Naive thymus-derived CD4-positive, alpha-beta T cell (primary cell): ENCODE measurements at regions of chr1 and their contacts with region 1.

Region 1: DNA sequence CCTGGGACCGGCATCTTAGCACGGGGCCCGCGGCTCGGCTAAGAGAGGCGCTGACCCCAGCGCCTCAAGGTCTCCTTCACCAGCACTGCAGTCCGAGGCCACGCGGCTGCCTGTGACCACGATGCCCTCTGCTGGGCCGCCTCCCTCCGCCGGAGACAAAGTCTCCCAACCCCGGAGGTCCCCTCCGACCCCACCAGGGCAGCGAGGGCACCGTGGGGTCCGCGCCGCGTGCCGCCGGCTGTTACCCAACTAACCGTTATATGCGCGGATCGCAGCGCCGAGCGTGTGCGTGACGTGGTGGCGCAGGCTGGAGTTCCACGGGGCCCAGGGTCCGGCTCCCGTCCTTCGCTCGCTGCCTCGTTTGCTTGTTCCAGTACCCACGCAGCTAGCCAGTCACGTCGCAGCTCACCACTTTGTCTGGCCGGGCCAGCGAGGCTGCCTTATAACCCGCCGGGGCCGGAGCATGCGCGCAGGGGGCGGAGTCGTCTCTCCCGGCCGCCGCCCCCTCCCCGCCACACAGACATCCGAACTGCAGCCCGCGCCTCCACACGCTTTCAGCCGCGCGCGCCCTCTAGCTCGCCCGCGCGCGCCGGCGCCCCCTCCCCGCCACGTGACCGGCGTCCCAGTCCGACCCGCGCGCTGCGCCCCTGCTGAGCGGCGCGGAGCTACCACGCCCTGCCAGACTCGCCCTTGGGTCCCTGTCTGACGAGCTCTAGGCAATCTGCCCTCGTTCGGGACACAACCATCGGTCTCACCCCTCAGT is at the start of gene SLC16A1:
- DNase-seq: peak; percentile 80 to 94 (median 87)
- ATAC-seq: peak; percentile 90
- H3K4me3 ChIP-seq: peak within 1 kb of the TSS; percentile 97
- H3K4me3 Mint-ChIP-seq: peak within 1 kb of the TSS; percentile 71 to 100 (median 97)
- H3K27ac ChIP-seq: peak within 1 kb of the TSS; percentile 81
- H3K27ac Mint-ChIP-seq: peak within 1 kb of the TSS; percentile 25 to 100 (median 88)
- H3K4me1 ChIP-seq: peaks cover 16 to 17% of the 10 kb centered on the region in 2 donors
- H3K4me1 Mint-ChIP-seq: peaks cover 33 to 66% (median 57%) of the 10 kb centered on the region in 7 donors
- H3K27me3 ChIP-seq: no peaks in the 10 kb centered on the region
- H3K27me3 Mint-ChIP-seq: no peaks in the 10 kb centered on the region
- total RNA-seq, gene SLC16A1: 10.1 to 43.6 (median 19.1) TPM

Region 2: DNA sequence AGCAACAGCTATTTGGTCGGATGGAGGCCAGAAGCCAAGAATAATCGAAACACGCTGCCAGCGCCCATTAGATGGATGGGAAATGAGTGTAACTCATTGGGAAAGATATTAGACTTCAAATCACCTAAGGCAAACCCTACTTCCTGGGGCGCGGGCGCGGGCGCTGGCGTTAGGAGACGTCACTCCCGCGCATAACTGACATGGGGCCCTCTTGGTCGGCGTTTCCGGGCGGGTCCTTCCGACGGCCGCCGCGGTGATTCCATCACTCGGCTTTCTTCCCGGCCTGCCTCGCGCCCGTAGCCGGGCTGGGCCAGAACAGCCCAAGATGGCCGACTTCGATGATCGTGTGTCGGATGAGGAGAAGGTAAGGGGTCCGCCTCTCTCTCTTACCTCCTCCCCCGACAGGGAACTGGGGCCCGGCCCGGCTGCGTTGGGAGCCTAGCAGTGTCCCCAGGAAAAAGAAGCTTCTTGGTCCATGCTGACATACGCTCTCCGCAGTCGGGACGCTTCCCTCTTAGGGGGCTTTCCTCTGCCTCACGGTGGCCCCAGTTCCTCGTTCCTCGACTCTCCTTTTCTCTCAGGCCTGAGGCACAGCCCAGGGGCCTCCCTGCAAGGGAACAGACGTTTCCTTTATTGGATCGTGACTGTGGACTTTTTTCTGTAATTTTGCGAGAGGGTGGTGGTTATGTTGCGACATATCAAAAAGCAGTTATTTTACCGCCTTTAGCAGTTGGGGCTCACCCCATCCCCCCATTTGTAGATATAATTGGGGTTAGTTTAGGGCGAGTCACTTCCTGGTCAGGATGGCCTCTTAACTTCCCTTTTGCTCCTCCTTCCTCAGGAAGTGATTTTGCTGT is 336.2 kb before region 1 on chr1 and contains the start of gene CAPZA1:
- CTCF ChIA-PET with region 1: no interaction called
- POLR2A ChIA-PET with region 1: interaction called, 3 read pairs
- intact Hi-C with region 1: loop called (anchors 1 kb)
- DNase-seq: peak; percentile 83 to 93 (median 91)
- ATAC-seq: peak; percentile 89
- H3K4me3 ChIP-seq: peak within 1 kb of the TSS; percentile 93
- H3K4me3 Mint-ChIP-seq: peak within 1 kb of the TSS; percentile 98 to 100 (median 99)
- H3K27ac ChIP-seq: peak within 1 kb of the TSS; percentile 100
- H3K27ac Mint-ChIP-seq: peak within 1 kb of the TSS; percentile 99 to 100 (median 100)
- H3K4me1 ChIP-seq: peaks cover 19 to 21% of the 10 kb centered on the region in 2 donors
- H3K4me1 Mint-ChIP-seq: peaks cover 27 to 55% (median 46%) of the 10 kb centered on the region in 7 donors
- H3K27me3 ChIP-seq: no peaks in the 10 kb centered on the region
- H3K27me3 Mint-ChIP-seq: peaks cover 0 to 1% (median 0%) of the 10 kb centered on the region in 5 donors
- total RNA-seq, gene CAPZA1: 114 to 237 (median 143) TPM

Region 3: GRCh38 chr1:112882271-112882744 is 73.7 kb before region 1 on chr1:
- CTCF ChIA-PET with region 1: interaction called, 5 read pairs
- POLR2A ChIA-PET with region 1: no interaction called
- intact Hi-C with region 1: loop called (anchors 1 to 2 kb)
- DNase-seq: no peak
- ATAC-seq: peak; percentile 16
- H3K4me3 ChIP-seq: no peak overlapping the region
- H3K4me3 Mint-ChIP-seq: no peak overlapping the region
- H3K27ac ChIP-seq: no peak overlapping the region
- H3K27ac Mint-ChIP-seq: no peak overlapping the region
- H3K4me1 ChIP-seq: no peaks in the 10 kb centered on the region
- H3K4me1 Mint-ChIP-seq: peaks cover 0 to 3% (median 0%) of the 10 kb centered on the region in 7 donors
- H3K27me3 ChIP-seq: no peaks in the 10 kb centered on the region
- H3K27me3 Mint-ChIP-seq: peaks cover 0 to 24% (median 4%) of the 10 kb centered on the region in 5 donors

Region 4: DNA sequence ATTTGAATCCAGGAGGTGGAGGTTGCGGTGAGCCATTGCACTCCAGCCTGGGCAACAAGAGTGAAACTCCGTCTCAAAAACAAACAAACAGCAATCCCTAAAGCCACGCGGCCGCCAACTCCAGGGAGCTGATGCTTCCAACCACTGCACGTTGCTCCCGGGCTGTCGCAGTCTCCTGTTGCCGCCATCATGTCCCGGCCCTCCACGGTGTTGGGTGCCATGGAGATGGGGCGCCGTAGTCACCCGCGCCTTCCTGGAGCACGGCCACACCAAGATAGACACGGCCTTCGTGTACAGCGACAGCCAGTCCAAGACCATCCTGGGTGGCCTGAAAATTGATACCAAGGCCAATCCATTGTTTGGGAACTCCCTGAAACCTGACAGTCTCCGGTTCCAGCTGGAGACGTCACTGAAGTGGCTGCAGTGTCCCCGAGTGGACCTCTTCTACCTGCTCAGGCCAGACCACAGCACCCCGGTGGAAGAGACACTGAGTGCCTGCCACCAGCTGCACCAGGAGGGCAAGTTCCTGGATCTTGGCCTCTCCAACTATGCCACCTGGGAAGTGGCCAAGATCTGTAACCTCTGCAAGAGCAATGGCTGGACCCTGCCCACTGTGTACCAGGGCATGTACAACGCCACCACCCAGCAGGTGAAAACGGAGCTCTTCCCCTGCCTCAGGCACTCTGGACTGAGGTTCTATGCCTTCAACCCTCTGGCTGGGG is 32.6 kb before region 1 on chr1:
- CTCF ChIA-PET with region 1: no interaction called
- POLR2A ChIA-PET with region 1: no interaction called
- intact Hi-C with region 1: no loop called
- DNase-seq: no peak
- ATAC-seq: no peak
- H3K4me3 ChIP-seq: no peak overlapping the region
- H3K4me3 Mint-ChIP-seq: no peak overlapping the region
- H3K27ac ChIP-seq: no peak overlapping the region
- H3K27ac Mint-ChIP-seq: no peak overlapping the region
- H3K4me1 ChIP-seq: no peaks in the 10 kb centered on the region
- H3K4me1 Mint-ChIP-seq: peaks cover 0 to 6% (median 0%) of the 10 kb centered on the region in 7 donors
- H3K27me3 ChIP-seq: no peaks in the 10 kb centered on the region
- H3K27me3 Mint-ChIP-seq: no peaks in the 10 kb centered on the region

Region 5: DNA sequence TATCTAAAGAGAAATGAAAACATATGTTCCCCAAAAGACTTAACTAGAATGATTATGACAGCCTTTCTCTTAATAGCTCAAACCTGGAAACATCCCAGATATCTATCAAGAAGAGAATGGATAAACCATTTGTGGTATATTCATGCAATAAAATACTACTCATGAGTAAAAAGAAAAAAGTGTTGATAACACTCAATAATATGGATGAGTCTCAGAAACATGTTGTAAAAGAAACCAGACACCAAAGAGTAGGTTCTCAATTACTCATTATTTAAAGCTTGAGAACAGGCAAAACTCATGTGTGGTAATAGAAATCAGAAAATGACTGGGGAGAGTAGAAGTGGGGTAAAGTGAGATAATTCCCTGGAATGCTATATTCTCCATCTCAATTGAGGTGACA is 649.2 kb after region 1 on chr1:
- CTCF ChIA-PET with region 1: no interaction called
- POLR2A ChIA-PET with region 1: no interaction called
- intact Hi-C with region 1: loop called in 1 of 2 experiments (anchors 5 kb)
- DNase-seq: no peak
- ATAC-seq: no peak
- H3K4me3 ChIP-seq: no peak overlapping the region
- H3K4me3 Mint-ChIP-seq: no peak overlapping the region
- H3K27ac ChIP-seq: no peak overlapping the region
- H3K27ac Mint-ChIP-seq: no peak overlapping the region
- H3K4me1 ChIP-seq: no peaks in the 10 kb centered on the region
- H3K4me1 Mint-ChIP-seq: peaks cover 0 to 9% (median 0%) of the 10 kb centered on the region in 7 donors
- H3K27me3 ChIP-seq: no peaks in the 10 kb centered on the region
- H3K27me3 Mint-ChIP-seq: peaks cover 0 to 2% (median 0%) of the 10 kb centered on the region in 5 donors

Region 6: GRCh38 chr1:114581335-114582287 is 1625.6 kb after region 1 on chr1 and contains the start of gene BCAS2:
- CTCF ChIA-PET with region 1: interaction called, 3 read pairs
- POLR2A ChIA-PET with region 1: no interaction called
- intact Hi-C with region 1: loop called in 1 of 2 experiments (anchors 1 kb)
- DNase-seq: peak; percentile 71 to 98 (median 97)
- ATAC-seq: peak; percentile 97
- H3K4me3 ChIP-seq: peak within 1 kb of the TSS; percentile 76
- H3K4me3 Mint-ChIP-seq: peak within 1 kb of the TSS; percentile 92 to 99 (median 98)
- H3K27ac ChIP-seq: peak within 1 kb of the TSS; percentile 93
- H3K27ac Mint-ChIP-seq: peak within 1 kb of the TSS; percentile 95 to 99 (median 98)
- H3K4me1 ChIP-seq: peaks cover 21 to 23% of the 10 kb centered on the region in 2 donors
- H3K4me1 Mint-ChIP-seq: peaks cover 14 to 55% (median 41%) of the 10 kb centered on the region in 7 donors
- H3K27me3 ChIP-seq: peaks cover 0 to 3% of the 10 kb centered on the region in 2 donors
- H3K27me3 Mint-ChIP-seq: peaks cover 0 to 4% (median 4%) of the 10 kb centered on the region in 5 donors
- total RNA-seq, gene BCAS2: 32.3 to 87.1 (median 46.0) TPM